ENCODE measurements at regions of chr12 and their contacts with region 1.

Region 1: GRCh38 chr12:14384783-14385638 is 19.5 kb downstream of the ATF7IP start:
- DNase-seq: peak; percentile 83
- H3K4me3 Mint-ChIP-seq: peak overlapping the region; percentile 73
- H3K27ac Mint-ChIP-seq: peak overlapping the region; percentile 97
- H3K4me1 Mint-ChIP-seq: peaks cover 63% of the 10 kb centered on the region
- H3K27me3 Mint-ChIP-seq: no peaks in the 10 kb centered on the region

Region 2: GRCh38 chr12:12724661-12725545 is 1660.1 kb before region 1 on chr12:
- CTCF ChIA-PET with region 1: no interaction called
- intact Hi-C with region 1: loop called (anchors 5 kb)
- DNase-seq: peak; percentile 94
- H3K4me3 Mint-ChIP-seq: peak overlapping the region; percentile 85
- H3K27ac Mint-ChIP-seq: peak overlapping the region; percentile 98
- H3K4me1 Mint-ChIP-seq: peaks cover 51% of the 10 kb centered on the region
- H3K27me3 Mint-ChIP-seq: no peaks in the 10 kb centered on the region

Region 3: GRCh38 chr12:12890815-12891645 is 1494.0 kb before region 1 on chr12 and contains the start of gene GPRC5A:
- CTCF ChIA-PET with region 1: no interaction called
- intact Hi-C with region 1: loop called (anchors 10 kb)
- DNase-seq: peak; percentile 68
- H3K4me3 Mint-ChIP-seq: peak within 1 kb of the TSS; percentile 82
- H3K27ac Mint-ChIP-seq: no peak within 1 kb of the TSS
- H3K4me1 Mint-ChIP-seq: peaks cover 16% of the 10 kb centered on the region
- H3K27me3 Mint-ChIP-seq: peaks cover 14% of the 10 kb centered on the region
- total RNA-seq, gene GPRC5A: 0.24 to 0.64 TPM

Region 4: DNA sequence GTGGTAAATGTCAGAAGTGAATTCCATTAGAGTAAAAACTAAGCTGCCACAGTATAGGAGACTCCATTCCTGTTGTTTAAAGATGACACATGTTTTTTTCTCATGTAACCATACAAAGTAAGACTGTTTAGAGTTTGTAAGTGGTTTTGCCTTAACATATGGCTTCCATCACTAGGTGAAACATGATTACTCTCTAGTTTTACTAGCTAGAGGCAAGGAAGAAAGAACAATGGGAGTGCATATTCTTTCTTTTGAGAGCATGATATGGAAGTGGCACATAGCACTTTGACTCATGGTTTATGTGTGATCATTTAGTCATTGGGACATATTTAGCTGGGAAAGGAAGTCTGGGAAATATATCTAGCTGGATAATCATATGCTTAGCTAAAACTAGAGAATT is 11.8 kb before region 1 on chr12:
- CTCF ChIA-PET with region 1: interaction called, 24 read pairs
- intact Hi-C with region 1: no loop called
- DNase-seq: no peak
- H3K4me3 Mint-ChIP-seq: peak overlapping the region; percentile 41
- H3K27ac Mint-ChIP-seq: peak overlapping the region; percentile 89
- H3K4me1 Mint-ChIP-seq: peaks cover 59% of the 10 kb centered on the region
- H3K27me3 Mint-ChIP-seq: no peaks in the 10 kb centered on the region

Region 5: DNA sequence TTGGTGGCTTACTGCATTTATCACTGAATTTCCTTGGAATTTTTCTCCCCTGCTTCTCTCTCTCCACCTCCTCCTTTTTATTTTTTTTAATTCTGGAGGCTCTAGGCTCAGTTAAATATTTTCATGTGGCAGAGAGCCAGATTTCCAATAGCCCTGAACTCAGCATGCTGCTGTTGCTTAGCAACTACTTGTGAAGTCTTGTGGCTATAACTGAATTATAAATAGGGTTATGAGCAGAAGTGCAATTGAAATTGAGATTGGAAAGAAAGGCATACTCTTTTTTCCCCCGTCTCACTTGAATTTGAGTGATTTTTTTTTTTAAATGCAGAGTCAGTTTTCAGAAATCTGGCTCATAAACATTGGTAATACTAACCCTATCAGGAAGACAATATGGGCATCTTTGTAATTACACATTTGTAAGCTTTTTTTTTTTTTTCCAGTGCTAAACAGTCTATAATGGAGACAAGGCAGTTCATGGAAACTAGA is 18.7 kb after region 1 on chr12:
- CTCF ChIA-PET with region 1: interaction called, 5 read pairs
- intact Hi-C with region 1: loop called (anchors 2 kb)
- DNase-seq: no peak
- H3K4me3 Mint-ChIP-seq: peak overlapping the region; percentile 28
- H3K27ac Mint-ChIP-seq: peak overlapping the region; percentile 63
- H3K4me1 Mint-ChIP-seq: peaks cover 82% of the 10 kb centered on the region
- H3K27me3 Mint-ChIP-seq: no peaks in the 10 kb centered on the region

Region 6: DNA sequence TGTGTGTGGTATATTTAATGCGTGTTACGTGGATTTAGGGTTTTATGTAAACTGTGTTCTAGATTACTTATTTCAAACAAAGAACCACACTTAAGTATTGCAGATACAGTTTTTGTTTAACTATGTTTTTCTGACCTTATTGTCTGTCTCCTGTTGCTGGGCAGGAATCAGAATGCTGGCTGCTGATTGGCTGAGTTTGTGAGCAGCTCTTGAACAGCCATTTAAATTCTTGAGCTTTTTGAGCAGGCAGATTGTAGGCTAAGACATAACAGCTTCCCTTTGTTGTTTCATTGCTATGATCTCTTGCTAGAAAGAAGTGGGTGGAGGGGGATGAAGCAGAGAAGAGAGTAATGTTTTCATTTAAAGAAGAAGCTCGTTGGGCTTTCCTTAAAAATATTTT is 32.7 kb after region 1 on chr12:
- CTCF ChIA-PET with region 1: interaction called, 18 read pairs
- intact Hi-C with region 1: no loop called
- DNase-seq: peak; percentile 89
- H3K4me3 Mint-ChIP-seq: peak overlapping the region; percentile 70
- H3K27ac Mint-ChIP-seq: peak overlapping the region; percentile 90
- H3K4me1 Mint-ChIP-seq: peaks cover 59% of the 10 kb centered on the region
- H3K27me3 Mint-ChIP-seq: no peaks in the 10 kb centered on the region

Region 7: DNA sequence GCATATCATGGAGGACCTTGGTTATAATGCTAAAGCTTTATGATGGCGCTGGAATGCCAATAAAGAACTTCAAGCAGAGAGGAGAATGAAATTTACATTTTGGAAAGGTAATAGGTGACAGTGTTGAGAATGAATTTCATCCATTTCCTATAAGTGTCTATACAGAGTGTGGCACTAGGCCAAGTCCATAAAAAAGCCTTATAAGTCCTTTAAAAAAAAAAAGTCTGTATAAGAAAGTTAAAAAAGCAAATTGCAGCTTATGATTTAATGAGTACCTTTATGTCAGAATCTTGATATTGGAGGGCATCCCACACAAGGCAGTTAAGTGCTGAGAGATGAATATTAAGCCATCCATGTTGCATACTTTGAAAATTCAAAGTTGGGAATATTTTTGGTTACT is 42.9 kb after region 1 on chr12:
- CTCF ChIA-PET with region 1: no interaction called
- intact Hi-C with region 1: no loop called
- DNase-seq: no peak
- H3K4me3 Mint-ChIP-seq: no peak overlapping the region
- H3K27ac Mint-ChIP-seq: no peak overlapping the region
- H3K4me1 Mint-ChIP-seq: peaks cover 67% of the 10 kb centered on the region
- H3K27me3 Mint-ChIP-seq: no peaks in the 10 kb centered on the region

Region 8: DNA sequence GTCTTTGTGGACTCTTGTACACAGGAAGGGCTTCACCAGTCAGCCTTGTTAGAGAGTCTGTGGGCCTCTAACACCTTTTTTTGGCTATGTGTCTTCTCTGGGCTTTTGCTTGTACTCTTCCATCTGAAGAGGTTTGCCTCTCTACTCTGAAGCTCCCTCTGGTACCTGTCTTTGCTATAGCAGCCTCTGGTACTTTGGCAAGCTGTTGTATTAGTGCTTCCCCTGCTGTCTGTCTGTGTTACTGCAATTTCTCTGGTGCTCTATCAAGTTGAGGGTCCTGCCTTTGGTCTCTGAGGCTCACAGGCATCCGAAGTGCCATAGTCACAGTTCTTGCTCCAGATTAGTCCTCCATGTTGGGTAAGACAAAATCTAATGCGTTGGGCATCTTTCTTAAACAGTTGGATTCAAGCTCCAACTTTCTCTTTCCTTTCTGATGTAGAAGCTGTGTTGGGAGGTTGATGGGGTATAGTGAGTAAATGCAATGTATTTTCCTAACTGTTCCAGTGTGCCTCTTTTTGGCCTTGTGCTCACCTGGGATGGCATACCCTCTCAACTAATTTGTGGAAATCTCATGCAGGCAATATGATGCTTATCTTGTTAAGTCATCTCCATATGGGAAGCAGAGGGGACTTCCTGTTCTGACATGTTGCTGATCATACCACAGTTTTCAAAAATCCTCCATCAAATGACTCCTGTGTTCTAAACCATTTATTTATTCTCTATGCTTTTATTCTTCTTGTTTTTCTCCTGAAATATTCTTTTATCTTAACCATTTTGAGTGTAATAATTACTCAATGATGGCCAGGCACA is 69.3 kb after region 1 on chr12:
- CTCF ChIA-PET with region 1: interaction called, 4 read pairs
- intact Hi-C with region 1: loop called (anchors 1 kb)
- DNase-seq: peak; percentile 31
- H3K4me3 Mint-ChIP-seq: no peak overlapping the region
- H3K27ac Mint-ChIP-seq: peak overlapping the region; percentile 82
- H3K4me1 Mint-ChIP-seq: peaks cover 54% of the 10 kb centered on the region
- H3K27me3 Mint-ChIP-seq: no peaks in the 10 kb centered on the region